ENCODE measurements at regions of chr7 and their contacts with region 1.

Region 1: GRCh38 chr7:30412810-30413504 is 65.6 kb downstream of the NOD1 start:
- DNase-seq: peak in 1 of 2 experiments; percentile 46
- H3K4me3 ChIP-seq: no peak overlapping the region
- H3K4me3 Mint-ChIP-seq: no peak overlapping the region
- H3K27ac Mint-ChIP-seq: no peak overlapping the region
- H3K4me1 ChIP-seq: no peaks in the 10 kb centered on the region
- H3K4me1 Mint-ChIP-seq: no peaks in the 10 kb centered on the region
- H3K27me3 ChIP-seq: no peaks in the 10 kb centered on the region
- H3K27me3 Mint-ChIP-seq: no peaks in the 10 kb centered on the region
- CTCF ChIP-seq: no peak

Region 2: DNA sequence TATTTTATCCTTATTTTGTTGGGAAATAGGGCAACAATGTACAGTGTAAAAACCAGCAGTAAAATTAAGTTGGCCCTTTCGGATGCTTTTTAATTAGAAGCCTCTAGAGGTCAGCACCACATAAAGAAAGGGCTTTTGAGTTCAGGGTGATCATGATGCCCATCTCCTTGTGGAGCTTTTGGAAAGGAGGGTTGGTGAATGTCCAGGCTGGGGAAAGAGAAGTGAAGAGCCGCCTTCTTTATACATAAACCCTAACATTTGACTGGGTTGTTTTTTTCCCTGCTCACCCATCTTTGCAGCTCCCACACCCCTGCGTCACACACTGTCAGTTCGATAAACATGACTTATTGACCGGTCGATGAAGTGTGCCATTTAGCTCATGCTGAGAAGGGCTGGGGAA is 248.4 kb before region 1 on chr7:
- CTCF ChIA-PET with region 1: no interaction called
- POLR2A ChIA-PET with region 1: no interaction called
- intact Hi-C with region 1: loop called (anchors 2 kb)
- DNase-seq: peak in 1 of 2 experiments; percentile 46
- H3K4me3 ChIP-seq: no peak overlapping the region
- H3K4me3 Mint-ChIP-seq: no peak overlapping the region
- H3K27ac Mint-ChIP-seq: no peak overlapping the region
- H3K4me1 ChIP-seq: peaks cover 15% of the 10 kb centered on the region; the same call in 1 of the 2 replicates
- H3K4me1 Mint-ChIP-seq: no peaks in the 10 kb centered on the region
- H3K27me3 ChIP-seq: no peaks in the 10 kb centered on the region
- H3K27me3 Mint-ChIP-seq: peaks cover 13% of the 10 kb centered on the region
- CTCF ChIP-seq: peak; percentile 25 to 59

Region 3: GRCh38 chr7:30225863-30226613 is 186.9 kb before region 1 on chr7:
- CTCF ChIA-PET with region 1: no interaction called
- POLR2A ChIA-PET with region 1: no interaction called
- intact Hi-C with region 1: loop called (anchors 10 kb)
- DNase-seq: no peak
- H3K4me3 ChIP-seq: no peak overlapping the region
- H3K4me3 Mint-ChIP-seq: no peak overlapping the region
- H3K27ac Mint-ChIP-seq: no peak overlapping the region
- H3K4me1 ChIP-seq: 0 out of 2 replicates have a peak, but pooled peaks cover 5% of the 10 kb centered on the region
- H3K4me1 Mint-ChIP-seq: peaks cover 15% of the 10 kb centered on the region
- H3K27me3 ChIP-seq: no peaks in the 10 kb centered on the region; the same call in 1 of the 2 replicates
- H3K27me3 Mint-ChIP-seq: peaks cover 3% of the 10 kb centered on the region
- CTCF ChIP-seq: no peak

Region 4: GRCh38 chr7:30478349-30479201 is 65.6 kb after region 1 on chr7 and contains the start of gene NOD1:
- CTCF ChIA-PET with region 1: no interaction called
- POLR2A ChIA-PET with region 1: no interaction called
- intact Hi-C with region 1: no loop called
- DNase-seq: peak; percentile 72 to 84
- H3K4me3 ChIP-seq: peak within 1 kb of the TSS; percentile 61
- H3K4me3 Mint-ChIP-seq: peak within 1 kb of the TSS; percentile 82
- H3K27ac Mint-ChIP-seq: peak within 1 kb of the TSS; percentile 55
- H3K4me1 ChIP-seq: 0 out of 2 replicates have a peak, but pooled peaks cover 10% of the 10 kb centered on the region
- H3K4me1 Mint-ChIP-seq: peaks cover 10% of the 10 kb centered on the region
- H3K27me3 ChIP-seq: no peaks in the 10 kb centered on the region
- H3K27me3 Mint-ChIP-seq: no peaks in the 10 kb centered on the region
- CTCF ChIP-seq: peak in 1 of 2 experiments; percentile 1
- total RNA-seq, gene NOD1: 5.4 and 7.0 TPM in 2 replicates

Measured in Caco-2 (cell line).